MCF 10A (cell line): ENCODE measurements at regions of chr7 and their contacts with region 1.

Region 1: GRCh38 chr7:100126931-100127865 is at the start of gene MBLAC1:
- DNase-seq: peak; percentile 89
- H3K4me3 Mint-ChIP-seq: peak within 1 kb of the TSS; percentile 98
- H3K27ac Mint-ChIP-seq: peak within 1 kb of the TSS; percentile 99
- H3K4me1 Mint-ChIP-seq: peaks cover 11% of the 10 kb centered on the region
- H3K27me3 Mint-ChIP-seq: no peaks in the 10 kb centered on the region
- CTCF ChIP-seq: no peak
- total RNA-seq, gene MBLAC1: 2.5 and 3.2 TPM in 2 replicates

Region 2: DNA sequence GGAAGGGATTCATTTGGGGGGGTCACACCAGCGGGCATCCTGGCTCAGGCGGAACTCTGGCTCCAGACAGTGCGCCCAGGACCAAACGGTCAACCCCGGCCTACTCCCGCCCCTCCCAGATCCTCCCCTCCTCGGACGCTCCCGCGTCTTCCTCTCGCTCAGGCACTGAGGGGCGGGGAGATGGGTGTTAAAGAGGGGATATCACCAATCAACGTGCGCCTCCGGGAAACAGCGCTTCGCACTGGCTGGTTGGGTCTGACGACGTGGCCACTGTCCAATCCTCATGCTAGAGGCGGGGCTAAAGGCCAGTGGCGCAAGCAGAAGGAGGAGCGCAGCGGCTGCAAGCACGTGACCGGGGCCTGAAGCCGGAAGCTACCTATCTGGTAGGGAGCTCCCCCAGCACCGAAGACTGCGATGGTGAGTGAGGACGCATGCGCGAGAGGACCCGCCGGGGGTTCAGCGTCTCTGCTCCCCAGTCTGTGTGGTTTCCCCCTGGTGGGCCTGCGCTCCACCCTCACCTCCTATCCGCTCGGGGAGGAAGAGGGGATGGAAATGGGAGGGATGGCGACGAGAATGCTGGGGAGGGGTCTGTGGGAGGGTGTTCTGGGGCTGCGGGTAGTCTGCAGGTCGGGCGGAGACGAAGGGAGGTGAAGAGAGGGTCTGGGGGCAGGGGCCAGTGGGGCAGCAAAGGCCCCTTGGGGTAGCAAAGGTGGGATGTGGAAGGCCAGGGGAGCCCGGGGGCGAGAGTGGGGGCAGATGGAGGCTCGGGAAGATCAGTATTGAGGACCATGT is 21.6 kb after region 1 on chr7 and contains the start of gene LAMTOR4:
- CTCF ChIA-PET with region 1: interaction called, 34 read pairs
- POLR2A ChIA-PET with region 1: interaction called, 10 read pairs
- intact Hi-C with region 1: no loop called
- DNase-seq: peak; percentile 99
- H3K4me3 Mint-ChIP-seq: peak within 1 kb of the TSS; percentile 92
- H3K27ac Mint-ChIP-seq: peak within 1 kb of the TSS; percentile 82
- H3K4me1 Mint-ChIP-seq: peaks cover 14% of the 10 kb centered on the region
- H3K27me3 Mint-ChIP-seq: no peaks in the 10 kb centered on the region
- CTCF ChIP-seq: no peak
- total RNA-seq, gene LAMTOR4: 76.6 and 87.3 TPM in 2 replicates